CD8-positive, alpha-beta T cell (primary cell): ENCODE measurements at regions of chr5 and their contacts with region 1.

Region 1: DNA sequence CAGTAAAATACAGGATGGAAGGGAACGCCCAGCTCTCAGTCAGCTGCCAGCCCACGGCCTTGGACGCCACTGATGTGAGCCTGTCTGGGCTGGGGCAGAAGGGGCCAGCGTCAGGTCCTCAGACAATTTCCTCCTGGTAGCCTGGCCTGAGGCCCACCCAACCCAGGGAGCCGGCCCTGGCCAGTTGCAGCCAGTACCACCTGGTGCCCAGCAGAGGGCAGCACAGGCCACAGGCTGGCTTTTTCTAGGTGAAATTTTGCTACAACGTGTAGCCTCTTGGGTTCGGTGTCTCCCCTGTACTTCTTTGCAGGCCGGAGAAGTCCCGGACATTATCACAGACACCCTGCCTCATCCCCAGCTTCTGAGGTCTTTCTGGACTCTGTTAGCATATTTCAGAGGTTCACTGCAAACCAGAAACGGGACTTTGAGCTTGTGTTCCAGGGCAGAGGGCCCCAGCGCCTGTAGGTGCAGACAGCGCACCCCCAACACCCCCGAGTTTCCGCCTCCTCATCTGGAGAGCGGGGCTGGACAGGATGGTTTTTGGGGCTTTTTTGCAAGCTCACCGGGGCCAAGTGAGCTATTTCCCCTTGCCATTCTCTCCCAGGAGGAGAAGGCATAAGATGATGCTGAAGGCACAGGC is 45.9 kb upstream of the KCNMB1 start:
- DNase-seq: peak; percentile 14 to 68 (median 54)
- ATAC-seq: peak; percentile 75
- H3K4me3 ChIP-seq: no peak overlapping the region
- H3K4me3 Mint-ChIP-seq: no peak overlapping the region
- H3K27ac ChIP-seq: no peak overlapping the region
- H3K27ac Mint-ChIP-seq: no peak overlapping the region
- H3K4me1 ChIP-seq: no peaks in the 10 kb centered on the region
- H3K4me1 Mint-ChIP-seq: no peaks in the 10 kb centered on the region
- H3K27me3 ChIP-seq: no peaks in the 10 kb centered on the region
- H3K27me3 Mint-ChIP-seq: no peaks in the 10 kb centered on the region
- CTCF ChIP-seq: peak; percentile 92

Region 2: DNA sequence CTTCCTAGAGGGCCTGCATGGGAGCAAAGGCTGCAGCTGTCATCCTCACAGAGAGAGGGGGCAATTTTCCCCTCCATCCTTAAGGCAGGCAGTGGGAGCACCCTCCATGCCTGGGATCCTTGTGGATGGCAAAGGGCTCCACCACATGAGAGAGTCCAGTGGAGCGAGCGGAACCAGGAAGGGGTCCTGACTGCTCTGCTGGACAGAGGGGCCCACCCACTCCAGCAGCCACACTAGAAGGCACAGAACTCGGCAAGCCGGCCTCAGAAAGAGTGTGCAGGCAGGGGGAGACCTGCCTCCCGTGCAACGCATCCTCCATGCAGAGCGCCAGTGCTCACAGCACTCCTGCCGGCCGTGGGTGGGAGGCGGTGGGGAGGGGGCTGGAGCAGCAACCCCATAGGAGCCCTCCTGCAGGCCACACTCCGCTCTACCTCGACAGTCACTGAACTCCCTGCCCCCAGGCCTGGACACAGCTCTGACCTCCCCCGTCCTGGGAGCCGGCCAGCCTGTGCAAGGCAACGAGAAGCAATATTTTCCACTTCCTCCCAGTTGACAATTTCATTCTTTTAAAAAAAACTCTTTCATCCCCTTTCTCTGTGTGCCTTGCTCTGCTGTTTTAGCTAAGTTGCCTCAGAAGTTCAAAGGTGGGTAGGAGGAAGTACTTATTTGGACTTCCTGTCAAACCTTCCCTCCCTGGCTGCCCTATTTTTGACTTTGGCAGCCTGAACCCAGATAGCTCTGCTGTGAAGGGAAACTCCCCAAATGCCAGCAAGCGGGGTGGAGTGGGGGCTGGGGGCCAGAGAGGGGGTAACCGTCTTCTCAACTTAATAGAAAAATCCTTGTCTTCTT is 132.2 kb before region 1 on chr5:
- CTCF ChIA-PET with region 1: no interaction called
- POLR2A ChIA-PET with region 1: no interaction called
- intact Hi-C with region 1: no loop called
- DNase-seq: peak; percentile 28 to 96 (median 68)
- ATAC-seq: peak; percentile 90
- H3K4me3 ChIP-seq: peak overlapping the region; percentile 42 to 60
- H3K4me3 Mint-ChIP-seq: peak overlapping the region; percentile 86
- H3K27ac ChIP-seq: peak overlapping the region; percentile 46 to 69
- H3K27ac Mint-ChIP-seq: peak overlapping the region; percentile 96
- H3K4me1 ChIP-seq: peaks cover 65% of the 10 kb centered on the region
- H3K4me1 Mint-ChIP-seq: peaks cover 84% of the 10 kb centered on the region
- H3K27me3 ChIP-seq: no peaks in the 10 kb centered on the region
- H3K27me3 Mint-ChIP-seq: no peaks in the 10 kb centered on the region
- CTCF ChIP-seq: peak; percentile 27

Region 3: DNA sequence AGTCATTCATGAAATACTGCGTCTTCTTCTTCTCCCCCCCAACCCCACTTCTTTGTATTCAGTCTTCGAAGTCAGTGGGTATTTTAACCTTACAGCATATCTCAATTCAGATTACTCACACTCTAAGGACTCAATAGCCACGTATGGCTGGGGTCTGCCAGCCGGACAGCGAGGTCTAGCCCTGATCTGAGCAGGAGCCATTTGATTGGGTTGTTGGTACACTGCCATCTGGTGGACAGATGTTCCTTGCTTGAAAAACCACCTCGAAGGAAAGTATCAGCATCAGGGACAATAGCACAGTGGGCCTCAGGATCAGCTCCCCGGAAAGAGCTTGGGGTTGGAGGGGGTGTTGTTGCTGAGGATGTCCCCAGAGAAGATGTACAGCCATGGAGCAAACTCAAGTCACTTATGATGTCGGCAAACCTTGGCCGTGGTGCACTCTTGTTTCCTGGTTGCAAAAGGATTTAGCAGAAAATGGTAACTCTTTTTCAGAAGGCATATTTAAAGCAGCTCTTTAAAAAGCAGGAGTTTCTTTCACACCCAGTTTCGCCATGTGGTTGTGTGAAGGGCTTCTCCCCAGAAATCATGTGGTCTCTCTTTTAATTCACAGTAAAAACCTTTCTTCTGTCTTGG is 14.2 kb before region 1 on chr5:
- CTCF ChIA-PET with region 1: interaction called, 90 read pairs
- POLR2A ChIA-PET with region 1: no interaction called
- intact Hi-C with region 1: no loop called
- DNase-seq: peak; percentile 22 to 75 (median 48)
- ATAC-seq: peak; percentile 58
- H3K4me3 ChIP-seq: no peak overlapping the region
- H3K4me3 Mint-ChIP-seq: no peak overlapping the region
- H3K27ac ChIP-seq: no peak overlapping the region
- H3K27ac Mint-ChIP-seq: no peak overlapping the region
- H3K4me1 ChIP-seq: peaks cover 18% of the 10 kb centered on the region
- H3K4me1 Mint-ChIP-seq: peaks cover 25% of the 10 kb centered on the region
- H3K27me3 ChIP-seq: no peaks in the 10 kb centered on the region
- H3K27me3 Mint-ChIP-seq: no peaks in the 10 kb centered on the region
- CTCF ChIP-seq: peak; percentile 79

Region 4: GRCh38 chr5:170491479-170491878 is 56.4 kb after region 1 on chr5:
- CTCF ChIA-PET with region 1: no interaction called
- POLR2A ChIA-PET with region 1: no interaction called
- intact Hi-C with region 1: no loop called
- DNase-seq: no peak
- ATAC-seq: no peak
- H3K4me3 ChIP-seq: no peak overlapping the region
- H3K4me3 Mint-ChIP-seq: no peak overlapping the region
- H3K27ac ChIP-seq: no peak overlapping the region
- H3K27ac Mint-ChIP-seq: no peak overlapping the region
- H3K4me1 ChIP-seq: no peaks in the 10 kb centered on the region
- H3K4me1 Mint-ChIP-seq: no peaks in the 10 kb centered on the region
- H3K27me3 ChIP-seq: peaks cover 0 to 2% of the 10 kb centered on the region in 2 experiments
- H3K27me3 Mint-ChIP-seq: peaks cover 16% of the 10 kb centered on the region
- CTCF ChIP-seq: no peak

Region 5: GRCh38 chr5:170633235-170634081 is 198.4 kb after region 1 on chr5:
- CTCF ChIA-PET with region 1: interaction called, 15 read pairs
- POLR2A ChIA-PET with region 1: no interaction called
- intact Hi-C with region 1: loop called in 1 of 2 experiments (anchors 1 kb)
- DNase-seq: no peak
- ATAC-seq: peak; percentile 40
- H3K4me3 ChIP-seq: peak overlapping the region; percentile 26 to 37
- H3K4me3 Mint-ChIP-seq: peak overlapping the region; percentile 88
- H3K27ac ChIP-seq: no peak overlapping the region
- H3K27ac Mint-ChIP-seq: no peak overlapping the region
- H3K4me1 ChIP-seq: peaks cover 11% of the 10 kb centered on the region
- H3K4me1 Mint-ChIP-seq: peaks cover 20% of the 10 kb centered on the region
- H3K27me3 ChIP-seq: no peaks in the 10 kb centered on the region
- H3K27me3 Mint-ChIP-seq: peaks cover 13% of the 10 kb centered on the region
- CTCF ChIP-seq: peak; percentile 57

Region 6: GRCh38 chr5:171336521-171337209 is 901.6 kb after region 1 on chr5:
- CTCF ChIA-PET with region 1: no interaction called
- POLR2A ChIA-PET with region 1: no interaction called
- intact Hi-C with region 1: loop called in 1 of 2 experiments (anchors 5 kb)
- DNase-seq: peak in 2 of 9 experiments; percentile 40 to 58
- ATAC-seq: no peak
- H3K4me3 ChIP-seq: peak overlapping the region; percentile 36 to 46
- H3K4me3 Mint-ChIP-seq: peak overlapping the region; percentile 66
- H3K27ac ChIP-seq: no peak overlapping the region
- H3K27ac Mint-ChIP-seq: no peak overlapping the region
- H3K4me1 ChIP-seq: no peaks in the 10 kb centered on the region
- H3K4me1 Mint-ChIP-seq: peaks cover 7% of the 10 kb centered on the region
- H3K27me3 ChIP-seq: peaks cover 0 to 2% of the 10 kb centered on the region in 2 experiments
- H3K27me3 Mint-ChIP-seq: peaks cover 35% of the 10 kb centered on the region
- CTCF ChIP-seq: no peak

Region 7: DNA sequence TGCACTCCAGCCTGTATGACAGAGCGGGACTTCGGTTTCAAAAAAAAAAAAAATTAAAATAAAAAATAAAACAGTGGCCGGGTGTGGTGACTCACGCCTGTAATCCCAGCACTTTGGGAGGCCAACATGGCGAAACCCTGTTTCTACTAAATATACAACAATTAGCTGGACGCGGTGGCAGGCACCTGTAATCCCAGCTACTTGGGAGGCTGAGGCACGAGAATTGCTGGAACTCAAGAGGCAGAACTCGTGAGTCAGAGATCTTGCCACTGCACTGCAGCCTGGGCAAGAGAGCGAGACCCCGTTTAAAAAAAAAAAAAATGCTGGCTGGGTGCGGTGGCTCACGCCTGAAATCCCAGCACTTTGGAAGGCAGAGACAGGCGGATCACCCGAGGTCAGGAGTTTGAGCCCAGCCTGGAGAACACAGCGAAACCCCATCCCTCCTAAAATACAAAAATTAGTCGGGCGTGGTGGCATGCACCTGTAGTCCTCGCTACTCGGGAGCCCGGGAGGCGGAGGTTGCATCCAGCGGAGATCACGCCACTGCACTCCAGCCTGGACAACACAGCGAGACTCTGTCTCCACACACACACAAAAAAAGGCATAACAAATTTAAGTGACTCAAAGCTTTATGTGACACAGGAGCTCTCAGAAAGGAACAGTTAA is 951.1 kb after region 1 on chr5:
- CTCF ChIA-PET with region 1: no interaction called
- POLR2A ChIA-PET with region 1: no interaction called
- intact Hi-C with region 1: no loop called
- DNase-seq: no peak
- ATAC-seq: no peak
- H3K4me3 ChIP-seq: no peak overlapping the region
- H3K4me3 Mint-ChIP-seq: peak overlapping the region; percentile 96
- H3K27ac ChIP-seq: no peak overlapping the region
- H3K27ac Mint-ChIP-seq: no peak overlapping the region
- H3K4me1 ChIP-seq: peaks cover 33% of the 10 kb centered on the region
- H3K4me1 Mint-ChIP-seq: peaks cover 35% of the 10 kb centered on the region
- H3K27me3 ChIP-seq: no peaks in the 10 kb centered on the region
- H3K27me3 Mint-ChIP-seq: peaks cover 3% of the 10 kb centered on the region
- CTCF ChIP-seq: no peak